ENCODE measurements at regions of chr9 and their contacts with region 1.

Region 1: DNA sequence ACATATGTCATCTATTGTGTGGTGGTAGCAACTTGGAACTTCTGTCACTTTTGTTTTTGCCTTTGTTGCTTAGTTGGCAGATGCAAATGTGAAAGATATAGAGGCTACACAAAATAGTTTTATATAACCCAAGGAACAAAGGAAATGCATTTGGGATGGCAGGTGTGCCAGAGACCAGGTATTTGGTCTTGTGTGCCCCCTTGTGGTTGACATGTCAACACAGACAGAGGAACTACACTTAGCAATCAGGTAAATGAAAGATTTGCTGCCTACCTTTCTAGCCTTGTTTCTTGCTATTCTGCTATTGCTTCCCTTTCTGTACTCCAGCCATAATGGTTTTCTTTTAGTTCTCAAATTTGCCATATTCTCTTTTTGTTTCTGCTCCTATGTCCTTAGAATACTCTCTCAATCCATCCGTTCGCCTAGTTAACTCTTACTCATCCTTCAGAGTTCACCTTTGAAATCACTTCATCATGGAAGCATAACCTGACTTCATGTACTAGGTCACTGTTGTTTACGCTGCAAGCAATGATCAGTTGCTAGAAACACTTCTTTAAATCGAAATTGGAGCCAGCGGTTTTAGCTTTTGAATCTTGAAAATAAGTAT is 119.5 kb downstream of the TRPM3 start:
- DNase-seq: peak in 1 of 2 experiments; percentile 9
- H3K4me3 ChIP-seq: no peak overlapping the region
- H3K27ac ChIP-seq: no peak overlapping the region
- H3K4me1 ChIP-seq: no peaks in the 10 kb centered on the region; a peak in 2 of 7 replicates
- H3K27me3 ChIP-seq: no peaks in the 10 kb centered on the region; a peak in 1 of 7 replicates
- CTCF ChIP-seq: peak; percentile 37 to 84 (median 80)
- EP300 ChIP-seq: no peak
- POLR2A ChIP-seq: no peak
- RAD21 ChIP-seq: peak; percentile 85 to 87

Region 2: DNA sequence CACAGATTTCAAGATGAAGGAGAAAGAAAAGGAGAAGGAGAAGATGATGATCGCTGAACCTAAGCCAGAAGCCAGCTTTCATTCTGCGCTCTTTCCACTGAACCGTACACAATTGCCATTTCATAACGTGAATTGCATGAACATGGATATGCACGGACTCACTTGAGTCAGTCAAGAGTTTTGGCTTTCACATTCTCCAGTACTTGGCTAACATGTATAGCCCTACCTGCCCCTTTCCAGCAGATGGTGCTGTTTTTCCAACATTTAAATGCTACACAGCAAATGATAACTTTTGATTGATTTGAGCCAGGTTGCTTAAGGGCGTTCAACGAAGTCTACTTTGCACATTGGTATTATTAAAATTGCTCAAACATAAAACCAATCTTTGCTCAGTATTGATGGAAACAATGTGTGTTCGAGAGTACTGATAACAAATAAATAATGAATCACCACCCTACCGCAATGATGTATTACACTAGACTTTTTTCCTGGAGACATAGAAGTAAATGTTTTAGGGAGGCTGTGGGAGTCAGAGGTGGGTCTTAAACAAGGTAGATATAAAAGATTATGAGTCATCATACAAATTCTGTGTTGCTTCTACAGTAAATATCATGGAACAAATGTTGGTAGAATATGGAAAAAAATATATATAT is 76.9 kb before region 1 on chr9:
- CTCF ChIA-PET with region 1: interaction called, 21 read pairs
- POLR2A ChIA-PET with region 1: no interaction called
- DNase-seq: no peak
- H3K4me3 ChIP-seq: no peak overlapping the region
- H3K27ac ChIP-seq: no peak overlapping the region
- H3K4me1 ChIP-seq: no peaks in the 10 kb centered on the region
- H3K27me3 ChIP-seq: no peaks in the 10 kb centered on the region
- CTCF ChIP-seq: peak in 2 of 3 experiments; percentile 72 to 91; a peak in 3 of 4 replicates
- EP300 ChIP-seq: no peak
- POLR2A ChIP-seq: no peak
- RAD21 ChIP-seq: peak; percentile 89 to 93

Region 3: DNA sequence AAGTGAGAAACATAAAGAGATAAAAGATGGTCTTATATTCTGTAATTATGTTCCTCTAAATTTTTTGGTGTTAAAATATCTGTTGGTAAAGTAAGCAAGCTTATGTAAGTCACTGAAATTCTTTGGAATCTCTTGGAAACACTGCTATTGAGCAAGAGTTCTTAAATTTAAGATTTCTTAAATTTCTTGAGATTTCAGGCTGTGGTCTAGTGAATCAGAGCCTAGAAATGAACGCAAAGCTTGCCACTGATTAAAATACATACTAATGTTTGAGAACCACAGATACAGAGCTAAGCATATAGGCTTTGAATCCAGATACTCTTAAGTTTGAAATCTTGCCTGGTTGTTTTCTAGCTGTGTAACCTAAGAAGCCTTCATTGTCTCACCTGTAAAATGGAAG is 13.9 kb before region 1 on chr9:
- CTCF ChIA-PET with region 1: interaction called, 12 read pairs
- POLR2A ChIA-PET with region 1: no interaction called
- DNase-seq: no peak
- H3K4me3 ChIP-seq: no peak overlapping the region
- H3K27ac ChIP-seq: no peak overlapping the region
- H3K4me1 ChIP-seq: no peaks in the 10 kb centered on the region
- H3K27me3 ChIP-seq: no peaks in the 10 kb centered on the region; a peak in 2 of 7 replicates
- CTCF ChIP-seq: no peak
- EP300 ChIP-seq: no peak
- POLR2A ChIP-seq: no peak
- RAD21 ChIP-seq: no peak

Region 4: DNA sequence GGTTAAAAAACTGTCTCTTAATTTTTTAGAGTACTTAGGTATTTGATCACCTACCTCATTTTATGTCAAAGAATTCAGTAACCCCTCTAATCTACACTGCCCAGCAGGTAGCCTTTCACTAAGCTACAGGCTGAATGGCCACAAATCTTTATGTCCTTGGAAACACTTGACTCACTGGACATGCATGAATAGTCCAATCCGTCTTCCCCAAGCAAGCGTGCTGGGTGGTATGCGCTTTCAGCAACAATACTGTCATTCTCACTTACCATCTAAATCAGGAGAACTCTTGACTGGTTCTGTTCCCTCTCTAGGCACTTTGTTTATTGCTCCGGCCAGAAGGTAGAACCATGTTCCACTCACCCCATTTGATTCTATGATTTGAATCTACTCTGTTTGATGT is 46.4 kb after region 1 on chr9:
- CTCF ChIA-PET with region 1: no interaction called
- POLR2A ChIA-PET with region 1: no interaction called
- DNase-seq: no peak
- H3K4me3 ChIP-seq: no peak overlapping the region
- H3K27ac ChIP-seq: no peak overlapping the region
- H3K4me1 ChIP-seq: no peaks in the 10 kb centered on the region; a peak in 1 of 7 replicates
- H3K27me3 ChIP-seq: no peaks in the 10 kb centered on the region
- CTCF ChIP-seq: no peak
- EP300 ChIP-seq: no peak
- POLR2A ChIP-seq: no peak
- RAD21 ChIP-seq: no peak

Region 5: DNA sequence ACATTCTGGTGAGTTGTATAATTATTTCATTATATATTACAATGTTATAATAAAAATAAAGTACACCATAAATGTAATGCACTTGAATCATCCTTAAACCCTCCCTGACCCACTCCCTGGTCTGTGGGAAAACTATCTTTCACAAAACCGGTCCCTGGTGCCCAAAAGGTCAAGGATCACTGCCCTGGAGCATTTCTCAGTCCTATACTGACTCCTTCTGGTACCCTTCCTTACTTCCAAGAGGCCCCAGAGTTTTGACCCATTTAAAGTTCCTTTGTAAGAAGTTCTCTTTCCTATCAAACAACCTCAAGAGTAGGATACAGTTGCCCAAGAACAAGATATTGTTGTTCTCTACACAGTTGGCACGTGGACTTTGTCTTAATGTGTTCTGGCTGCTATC is 208.4 kb after region 1 on chr9:
- CTCF ChIA-PET with region 1: interaction called, 10 read pairs
- POLR2A ChIA-PET with region 1: interaction called, 3 read pairs
- DNase-seq: no peak
- H3K4me3 ChIP-seq: no peak overlapping the region
- H3K27ac ChIP-seq: no peak overlapping the region
- H3K4me1 ChIP-seq: no peaks in the 10 kb centered on the region; a peak in 1 of 7 replicates
- H3K27me3 ChIP-seq: no peaks in the 10 kb centered on the region
- CTCF ChIP-seq: peak in 2 of 3 experiments; percentile 56 to 78; a peak in 3 of 4 replicates
- EP300 ChIP-seq: no peak
- POLR2A ChIP-seq: no peak
- RAD21 ChIP-seq: peak; percentile 92 to 94

Region 6: GRCh38 chr9:71249729-71250317 is 247.9 kb after region 1 on chr9:
- CTCF ChIA-PET with region 1: interaction called, 14 read pairs
- POLR2A ChIA-PET with region 1: no interaction called
- DNase-seq: no peak
- H3K4me3 ChIP-seq: no peak overlapping the region
- H3K27ac ChIP-seq: no peak overlapping the region
- H3K4me1 ChIP-seq: peaks cover 0 to 14% (median 7%) of the 10 kb centered on the region in 4 experiments; a peak in 2 of 7 replicates
- H3K27me3 ChIP-seq: no peaks in the 10 kb centered on the region
- CTCF ChIP-seq: peak in 2 of 3 experiments; percentile 81 to 99; a peak in 3 of 4 replicates
- EP300 ChIP-seq: no peak
- POLR2A ChIP-seq: no peak
- RAD21 ChIP-seq: peak; percentile 72 to 78

Measured in H1 (cell line).